Left cardiac atrium (tissue), 4 donors: ENCODE measurements at regions of chr4 and their contacts with region 1.

Region 1: DNA sequence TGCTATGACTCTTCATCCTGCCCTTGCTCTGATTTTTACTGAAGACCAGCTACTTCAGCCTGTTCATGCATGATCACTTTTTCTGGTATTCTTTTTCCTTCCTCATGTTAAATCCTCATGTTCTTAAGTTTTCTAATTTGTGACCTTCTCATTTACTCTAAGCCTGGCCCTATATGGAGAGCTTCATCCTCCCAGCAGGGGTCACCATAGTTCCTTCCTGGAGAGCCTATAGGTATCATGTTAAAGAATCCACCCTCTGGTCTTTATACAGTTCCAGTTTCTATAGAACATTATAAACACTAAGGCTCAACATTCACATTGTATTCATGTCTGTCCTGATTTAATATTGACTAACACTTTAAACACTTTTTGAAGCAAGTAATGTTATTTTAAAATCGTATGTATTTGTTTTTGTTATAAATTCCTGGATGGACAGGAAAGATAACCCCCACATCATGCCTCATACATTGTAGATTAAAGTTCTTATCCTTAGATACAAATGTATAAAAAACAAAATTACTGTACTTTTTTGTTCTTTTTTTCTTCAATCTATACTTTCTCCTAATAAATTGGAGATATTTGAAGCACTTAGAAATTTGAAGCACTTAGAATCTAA is 53.8 kb upstream of the OTUD4 start:
- DNase-seq: peak; percentile 25
- ATAC-seq: peak in 1 of 2 donors; percentile 71

Region 2: DNA sequence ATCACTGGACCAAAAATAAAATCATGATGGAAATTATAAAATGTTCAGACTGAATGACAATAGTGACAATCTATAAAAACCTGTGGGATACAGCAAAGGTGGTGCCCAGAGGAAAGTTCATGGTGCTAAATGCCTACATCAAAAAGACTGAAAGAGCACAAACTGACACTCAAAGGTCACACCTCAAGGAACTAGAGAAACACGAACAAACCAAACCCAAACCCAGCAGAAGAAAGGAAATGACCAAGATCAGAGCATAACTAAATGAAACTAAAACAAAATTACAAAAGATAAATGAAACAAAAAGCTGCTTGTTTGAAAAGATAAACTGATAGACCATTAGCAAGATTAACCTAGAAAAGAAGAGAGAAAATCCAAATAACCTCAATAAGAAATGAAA is 214.9 kb before region 1 on chr4:
- intact Hi-C with region 1: no loop called
- DNase-seq: no peak
- ATAC-seq: no peak

Region 3: GRCh38 chr4:145481164-145481941 is 247.2 kb after region 1 on chr4 and contains the start of gene SMAD1:
- intact Hi-C with region 1: loop called in 1 of 2 experiments (anchors 10 kb)
- DNase-seq: peak; percentile 88
- ATAC-seq: peak; percentile 96 to 98
- total RNA-seq, gene SMAD1: 9.8 to 10.6 TPM

Region 4: GRCh38 chr4:145557720-145558119 is 323.5 kb after region 1 on chr4:
- intact Hi-C with region 1: loop called (anchors 1 to 10 kb)
- DNase-seq: peak; percentile 36
- ATAC-seq: peak; percentile 71 to 83

Region 5: GRCh38 chr4:145565328-145565727 is 331.1 kb after region 1 on chr4:
- intact Hi-C with region 1: loop called in 1 of 2 experiments (anchors 10 kb)
- DNase-seq: no peak
- ATAC-seq: no peak

Region 6: GRCh38 chr4:145609481-145610427 is 375.6 kb after region 1 on chr4:
- intact Hi-C with region 1: loop called (anchors 5 kb)
- DNase-seq: peak; percentile 30
- ATAC-seq: peak in 1 of 2 donors; percentile 43